ENCODE measurements at regions of chr16 and their contacts with region 1.

Region 1: GRCh38 chr16:30395155-30395991 is at the start of gene ZNF48:
- DNase-seq: peak; percentile 33 to 72 (median 45)
- ATAC-seq: peak; percentile 80
- H3K4me3 ChIP-seq: peak within 1 kb of the TSS; percentile 80
- H3K4me3 Mint-ChIP-seq: peak within 1 kb of the TSS; percentile 85 to 92 (median 88)
- H3K27ac ChIP-seq: peak within 1 kb of the TSS; percentile 71
- H3K27ac Mint-ChIP-seq: peak within 1 kb of the TSS; percentile 69 to 95 (median 83)
- H3K4me1 ChIP-seq: peaks cover 14 to 22% of the 10 kb centered on the region in 2 donors
- H3K4me1 Mint-ChIP-seq: peaks cover 23 to 39% (median 32%) of the 10 kb centered on the region in 7 donors
- H3K27me3 ChIP-seq: no peaks in the 10 kb centered on the region
- H3K27me3 Mint-ChIP-seq: no peaks in the 10 kb centered on the region
- total RNA-seq, gene ZNF48: 6.0 to 16.0 (median 15.6) TPM

Region 2: GRCh38 chr16:30370444-30371247 is 24.7 kb before region 1 on chr16 and contains the start of gene TBC1D10B:
- CTCF ChIA-PET with region 1: interaction called, 4 read pairs
- POLR2A ChIA-PET with region 1: interaction called, 15 read pairs
- intact Hi-C with region 1: loop called in 1 of 2 experiments (anchors 2 kb)
- DNase-seq: peak; percentile 89 to 100 (median 100)
- ATAC-seq: peak; percentile 91
- H3K4me3 ChIP-seq: peak within 1 kb of the TSS; percentile 76
- H3K4me3 Mint-ChIP-seq: peak within 1 kb of the TSS; percentile 83 to 92 (median 89)
- H3K27ac ChIP-seq: peak within 1 kb of the TSS; percentile 80
- H3K27ac Mint-ChIP-seq: peak within 1 kb of the TSS; percentile 63 to 98 (median 93)
- H3K4me1 ChIP-seq: peaks cover 24 to 25% of the 10 kb centered on the region in 2 donors
- H3K4me1 Mint-ChIP-seq: peaks cover 42 to 54% (median 50%) of the 10 kb centered on the region in 7 donors
- H3K27me3 ChIP-seq: no peaks in the 10 kb centered on the region
- H3K27me3 Mint-ChIP-seq: peaks cover 0 to 3% (median 0%) of the 10 kb centered on the region in 5 donors
- total RNA-seq, gene TBC1D10B: 23.2 to 70.0 (median 45.2) TPM

Region 3: GRCh38 chr16:30378236-30379204 is 16.9 kb before region 1 on chr16:
- CTCF ChIA-PET with region 1: interaction called, 7 read pairs
- POLR2A ChIA-PET with region 1: interaction called, 254 read pairs
- intact Hi-C with region 1: loop called (anchors 1 kb)
- DNase-seq: peak; percentile 97 to 99 (median 99)
- ATAC-seq: peak; percentile 91
- H3K4me3 ChIP-seq: peak overlapping the region; percentile 88
- H3K4me3 Mint-ChIP-seq: peak overlapping the region; percentile 90 to 100 (median 97)
- H3K27ac ChIP-seq: peak overlapping the region; percentile 100
- H3K27ac Mint-ChIP-seq: peak overlapping the region; percentile 98 to 100 (median 100)
- H3K4me1 ChIP-seq: peaks cover 54 to 56% of the 10 kb centered on the region in 2 donors
- H3K4me1 Mint-ChIP-seq: peaks cover 32 to 61% (median 49%) of the 10 kb centered on the region in 7 donors
- H3K27me3 ChIP-seq: no peaks in the 10 kb centered on the region
- H3K27me3 Mint-ChIP-seq: no peaks in the 10 kb centered on the region